Mammary epithelial cell (primary cell): ENCODE measurements at regions of chr2 and their contacts with region 1.

Region 1: GRCh38 chr2:83850071-83850725 is 608.9 kb downstream of the SUCLG1 start:
- DNase-seq: peak; percentile 84
- H3K4me3 ChIP-seq: no peak overlapping the region
- H3K27ac ChIP-seq: peak overlapping the region; percentile 97
- H3K4me1 ChIP-seq: peaks cover 24% of the 10 kb centered on the region
- H3K27me3 ChIP-seq: no peaks in the 10 kb centered on the region
- CTCF ChIP-seq: no peak

Region 2: DNA sequence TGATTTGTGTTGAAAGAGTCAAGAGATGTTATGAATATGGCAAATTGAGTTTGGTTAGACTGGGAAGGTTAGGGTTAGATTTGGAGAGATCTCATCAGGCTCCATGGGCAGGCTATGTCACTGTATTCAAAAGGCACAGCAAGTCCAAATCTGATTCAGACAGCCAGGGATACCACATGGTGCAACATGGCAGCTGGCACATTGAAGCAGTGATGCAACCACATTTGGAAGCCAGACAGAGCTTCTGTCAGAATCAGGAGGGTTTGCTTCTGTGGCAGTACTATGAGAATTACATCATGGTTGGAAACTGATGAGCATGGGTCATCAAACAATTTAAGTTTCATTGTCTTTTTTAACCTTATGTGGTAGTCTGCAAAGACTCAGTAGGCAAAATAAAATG is 163.3 kb before region 1 on chr2:
- CTCF ChIA-PET with region 1: no interaction called
- dilution Hi-C with region 1: no loop called
- in situ Hi-C with region 1: no loop called
- intact Hi-C with region 1: no loop called
- DNase-seq: no peak
- H3K4me3 ChIP-seq: no peak overlapping the region
- H3K27ac ChIP-seq: no peak overlapping the region
- H3K4me1 ChIP-seq: no peaks in the 10 kb centered on the region
- H3K27me3 ChIP-seq: no peaks in the 10 kb centered on the region
- CTCF ChIP-seq: no peak

Region 3: GRCh38 chr2:83808878-83809277 is 41.3 kb before region 1 on chr2:
- CTCF ChIA-PET with region 1: no interaction called
- dilution Hi-C with region 1: no loop called
- in situ Hi-C with region 1: no loop called
- intact Hi-C with region 1: no loop called
- DNase-seq: no peak
- H3K4me3 ChIP-seq: no peak overlapping the region
- H3K27ac ChIP-seq: no peak overlapping the region
- H3K4me1 ChIP-seq: no peaks in the 10 kb centered on the region
- H3K27me3 ChIP-seq: no peaks in the 10 kb centered on the region
- CTCF ChIP-seq: no peak

Region 4: GRCh38 chr2:83900862-83901261 is 50.7 kb after region 1 on chr2:
- CTCF ChIA-PET with region 1: no interaction called
- dilution Hi-C with region 1: no loop called
- in situ Hi-C with region 1: no loop called
- intact Hi-C with region 1: loop called (anchors 1 kb)
- DNase-seq: peak; percentile 87
- H3K4me3 ChIP-seq: no peak overlapping the region
- H3K27ac ChIP-seq: no peak overlapping the region
- H3K4me1 ChIP-seq: no peaks in the 10 kb centered on the region
- H3K27me3 ChIP-seq: no peaks in the 10 kb centered on the region
- CTCF ChIP-seq: no peak

Region 5: GRCh38 chr2:83967854-83968253 is 117.7 kb after region 1 on chr2:
- CTCF ChIA-PET with region 1: no interaction called
- dilution Hi-C with region 1: no loop called
- in situ Hi-C with region 1: no loop called
- intact Hi-C with region 1: loop called (anchors 5 kb)
- DNase-seq: peak; percentile 10
- H3K4me3 ChIP-seq: no peak overlapping the region
- H3K27ac ChIP-seq: no peak overlapping the region
- H3K4me1 ChIP-seq: no peaks in the 10 kb centered on the region
- H3K27me3 ChIP-seq: no peaks in the 10 kb centered on the region
- CTCF ChIP-seq: peak; percentile 37 to 63